ENCODE measurements at regions of chr1 and their contacts with region 1.

Region 1: DNA sequence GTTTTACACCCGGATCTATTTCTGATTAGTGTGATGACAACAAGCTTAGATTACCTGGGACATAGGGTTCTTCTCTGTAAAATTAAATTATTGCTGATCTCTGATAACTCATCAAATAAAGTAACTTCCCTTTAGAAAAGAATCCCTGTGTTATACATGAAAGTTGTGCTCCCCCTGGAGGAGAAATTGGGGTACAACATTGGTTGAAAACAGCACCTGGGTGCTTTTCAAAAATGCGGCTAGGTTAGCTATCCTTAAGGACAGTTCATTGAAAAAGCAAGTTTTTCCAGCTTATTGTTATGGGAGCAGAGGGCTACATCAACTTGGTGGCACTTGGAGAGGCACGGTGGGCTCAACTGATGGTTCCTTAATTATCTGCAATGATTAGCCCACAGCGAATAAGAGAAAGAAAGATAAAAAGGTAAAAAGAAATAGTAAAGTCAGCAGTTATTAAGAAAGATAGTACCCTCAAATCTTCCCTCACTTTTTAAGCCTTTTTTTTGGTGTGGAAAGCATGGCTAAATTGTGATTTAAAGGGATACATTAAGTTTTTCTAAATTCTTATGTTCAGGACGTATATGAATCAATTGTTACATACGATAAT is 97.8 kb downstream of the FMN2 start:
- DNase-seq: peak in 5 of 7 donors; percentile 20 to 54 (median 45)
- H3K4me3 ChIP-seq: no peak overlapping the region
- H3K27ac ChIP-seq: no peak overlapping the region
- H3K4me1 ChIP-seq: no peaks in the 10 kb centered on the region
- H3K27me3 ChIP-seq: no peaks in the 10 kb centered on the region
- CTCF ChIP-seq: peak; percentile 54 to 77 (median 65)
- POLR2A ChIP-seq: no peak

Region 2: GRCh38 chr1:240691521-240692338 is 502.2 kb after region 1 on chr1:
- intact Hi-C with region 1: loop called in 1 of 2 experiments (anchors 10 kb)
- DNase-seq: peak; percentile 12 to 57 (median 33)
- H3K4me3 ChIP-seq: no peak overlapping the region
- H3K27ac ChIP-seq: no peak overlapping the region
- H3K4me1 ChIP-seq: no peaks in the 10 kb centered on the region
- H3K27me3 ChIP-seq: peaks cover 5% of the 10 kb centered on the region
- CTCF ChIP-seq: peak; percentile 21 to 74 (median 56)
- POLR2A ChIP-seq: no peak

Measured in adrenal gland (tissue), 19 donors.